ENCODE measurements at regions of chr11 and their contacts with region 1.

Region 1: GRCh38 chr11:93895106-93895862 is 44.9 kb upstream of the VSTM5 start:
- DNase-seq: peak in 5 of 14 experiments; percentile 7 to 53 (median 35)
- ATAC-seq: peak; percentile 49
- H3K4me3 ChIP-seq: no peak overlapping the region
- H3K4me3 Mint-ChIP-seq: no peak overlapping the region
- H3K27ac ChIP-seq: no peak overlapping the region
- H3K27ac Mint-ChIP-seq: no peak overlapping the region
- H3K4me1 ChIP-seq: no peaks in the 10 kb centered on the region
- H3K4me1 Mint-ChIP-seq: no peaks in the 10 kb centered on the region
- H3K27me3 ChIP-seq: peaks cover 11 to 22% of the 10 kb centered on the region in 2 experiments
- H3K27me3 Mint-ChIP-seq: peaks cover 68% of the 10 kb centered on the region
- CTCF ChIP-seq: peak; percentile 48

Region 2: GRCh38 chr11:93831343-93832139 is 63.7 kb before region 1 on chr11:
- CTCF ChIA-PET with region 1: no interaction called
- POLR2A ChIA-PET with region 1: no interaction called
- intact Hi-C with region 1: no loop called
- DNase-seq: no peak
- ATAC-seq: no peak
- H3K4me3 ChIP-seq: no peak overlapping the region
- H3K4me3 Mint-ChIP-seq: no peak overlapping the region
- H3K27ac ChIP-seq: no peak overlapping the region
- H3K27ac Mint-ChIP-seq: no peak overlapping the region
- H3K4me1 ChIP-seq: no peaks in the 10 kb centered on the region
- H3K4me1 Mint-ChIP-seq: no peaks in the 10 kb centered on the region
- H3K27me3 ChIP-seq: peaks cover 0 to 2% of the 10 kb centered on the region in 2 experiments
- H3K27me3 Mint-ChIP-seq: no peaks in the 10 kb centered on the region
- CTCF ChIP-seq: no peak

Region 3: DNA sequence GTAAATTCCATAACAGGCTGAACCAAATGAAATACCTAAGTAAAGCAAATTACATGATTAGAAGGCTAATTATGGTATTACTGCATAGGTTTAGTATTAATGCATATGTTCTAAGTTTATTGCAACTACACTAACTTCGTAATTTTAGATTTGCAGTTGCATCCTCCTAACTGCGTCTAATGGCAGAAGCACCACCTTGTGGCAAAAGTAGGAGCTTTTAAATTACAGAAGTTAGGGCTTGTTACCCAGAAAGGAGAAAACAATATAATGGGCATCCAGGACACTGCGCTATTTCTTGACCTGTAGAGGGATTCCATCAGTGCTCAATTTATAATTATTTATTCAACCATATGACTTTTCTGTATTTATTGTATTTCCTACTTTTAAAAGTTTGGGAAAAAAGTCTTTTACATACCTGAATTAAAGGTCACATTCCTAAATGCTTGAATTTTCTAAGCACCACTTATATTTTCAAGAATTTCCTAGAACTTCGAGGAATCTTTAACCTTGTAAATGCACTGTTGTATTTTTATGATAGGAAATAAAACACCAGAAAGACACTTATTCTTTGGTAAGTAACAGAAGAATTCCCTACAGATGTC is 522.2 kb after region 1 on chr11:
- CTCF ChIA-PET with region 1: no interaction called
- POLR2A ChIA-PET with region 1: no interaction called
- intact Hi-C with region 1: loop called in 1 of 2 experiments (anchors 10 kb)
- DNase-seq: no peak
- ATAC-seq: no peak
- H3K4me3 ChIP-seq: no peak overlapping the region
- H3K4me3 Mint-ChIP-seq: no peak overlapping the region
- H3K27ac ChIP-seq: no peak overlapping the region
- H3K27ac Mint-ChIP-seq: no peak overlapping the region
- H3K4me1 ChIP-seq: no peaks in the 10 kb centered on the region
- H3K4me1 Mint-ChIP-seq: no peaks in the 10 kb centered on the region
- H3K27me3 ChIP-seq: no peaks in the 10 kb centered on the region
- H3K27me3 Mint-ChIP-seq: no peaks in the 10 kb centered on the region
- CTCF ChIP-seq: no peak

Region 4: GRCh38 chr11:94602430-94603372 is 707.4 kb after region 1 on chr11:
- CTCF ChIA-PET with region 1: interaction called, 3 read pairs
- POLR2A ChIA-PET with region 1: no interaction called
- intact Hi-C with region 1: loop called in 1 of 2 experiments (anchors 5 kb)
- DNase-seq: peak in 10 of 14 experiments; percentile 2 to 76 (median 24)
- ATAC-seq: peak; percentile 51
- H3K4me3 ChIP-seq: no peak overlapping the region
- H3K4me3 Mint-ChIP-seq: no peak overlapping the region
- H3K27ac ChIP-seq: no peak overlapping the region
- H3K27ac Mint-ChIP-seq: no peak overlapping the region
- H3K4me1 ChIP-seq: no peaks in the 10 kb centered on the region
- H3K4me1 Mint-ChIP-seq: no peaks in the 10 kb centered on the region
- H3K27me3 ChIP-seq: no peaks in the 10 kb centered on the region
- H3K27me3 Mint-ChIP-seq: no peaks in the 10 kb centered on the region
- CTCF ChIP-seq: peak; percentile 52